ENCODE measurements at regions of chr19 and their contacts with region 1.

Region 1: DNA sequence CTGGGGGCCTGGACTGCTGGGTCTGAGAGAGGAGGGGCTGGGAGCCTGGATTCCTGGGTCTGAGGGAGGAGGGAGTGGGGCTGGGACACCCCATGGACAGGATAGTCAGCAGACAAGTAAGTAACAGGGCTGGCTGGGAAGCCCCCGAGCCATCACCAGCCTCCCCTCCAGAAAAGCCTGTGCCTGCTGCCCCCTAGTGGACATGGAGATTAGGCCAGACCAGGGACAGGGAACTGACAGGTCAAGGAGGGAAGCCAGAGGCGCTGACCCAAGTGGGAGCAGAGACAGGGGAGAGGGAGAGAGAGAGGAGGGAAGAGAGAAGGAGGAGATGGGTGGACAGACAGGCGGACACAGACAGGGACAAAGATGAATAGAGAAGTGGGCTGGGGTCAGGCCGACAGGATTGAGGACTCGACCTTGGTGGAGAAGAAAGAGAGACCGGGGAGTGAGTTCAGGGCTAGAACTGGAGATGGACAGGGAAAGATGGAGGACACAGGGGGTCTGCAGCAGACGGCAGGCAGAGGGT is 6.7 kb upstream of the ERFL start:
- DNase-seq: peak; percentile 85
- H3K4me3 ChIP-seq: no peak overlapping the region
- H3K27ac ChIP-seq: peak overlapping the region; percentile 62
- H3K4me1 ChIP-seq: peaks cover 87% of the 10 kb centered on the region
- CTCF ChIP-seq: peak; percentile 97

Region 2: DNA sequence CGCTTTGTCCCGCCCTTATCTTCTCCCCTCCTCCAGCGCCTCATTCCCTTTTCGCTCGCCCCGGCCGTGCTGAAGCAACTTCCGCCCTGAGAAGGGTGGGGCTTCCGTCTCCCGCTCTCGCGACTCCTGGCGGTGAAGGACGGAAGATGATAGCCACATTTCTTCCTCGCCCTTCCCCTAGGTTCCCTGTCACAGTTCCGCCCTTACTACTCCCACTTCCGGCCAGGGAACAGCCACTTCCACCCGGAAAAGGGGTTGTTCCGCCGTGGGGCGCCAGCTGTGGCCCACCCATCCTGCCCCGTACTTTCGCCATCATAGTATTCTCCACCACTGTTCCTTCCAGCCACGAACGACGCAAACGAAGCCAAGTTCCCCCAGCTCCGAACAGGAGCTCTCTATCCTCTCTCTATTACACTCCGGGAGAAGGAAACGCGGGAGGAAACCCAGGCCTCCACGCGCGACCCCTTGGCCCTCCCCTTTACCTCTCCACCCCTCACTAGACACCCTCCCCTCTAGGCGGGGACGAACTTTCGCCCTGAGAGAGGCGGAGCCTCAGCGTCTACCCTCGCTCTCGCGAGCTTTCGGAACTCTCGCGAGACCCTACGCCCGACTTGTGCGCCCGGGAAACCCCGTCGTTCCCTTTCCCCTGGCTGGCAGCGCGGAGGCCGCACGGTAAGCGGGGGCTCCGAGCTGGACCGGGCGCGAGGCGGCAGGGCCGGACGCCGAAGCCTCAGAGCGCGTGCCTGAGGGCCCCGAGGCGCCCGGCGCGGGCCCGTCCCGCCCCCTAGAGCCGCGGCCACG is 75.1 kb before region 1 on chr19 and contains the start of gene RPS19:
- CTCF ChIA-PET with region 1: no interaction called
- POLR2A ChIA-PET with region 1: no interaction called
- intact Hi-C with region 1: no loop called
- DNase-seq: peak; percentile 98
- H3K4me3 ChIP-seq: peak within 1 kb of the TSS; percentile 96
- H3K27ac ChIP-seq: peak within 1 kb of the TSS; percentile 85
- H3K4me1 ChIP-seq: peaks cover 61% of the 10 kb centered on the region
- CTCF ChIP-seq: peak; percentile 54; the same call in 1 of the 2 replicates
- total RNA-seq, gene RPS19: 4,018 and 4,414 TPM in 2 replicates

Region 3: DNA sequence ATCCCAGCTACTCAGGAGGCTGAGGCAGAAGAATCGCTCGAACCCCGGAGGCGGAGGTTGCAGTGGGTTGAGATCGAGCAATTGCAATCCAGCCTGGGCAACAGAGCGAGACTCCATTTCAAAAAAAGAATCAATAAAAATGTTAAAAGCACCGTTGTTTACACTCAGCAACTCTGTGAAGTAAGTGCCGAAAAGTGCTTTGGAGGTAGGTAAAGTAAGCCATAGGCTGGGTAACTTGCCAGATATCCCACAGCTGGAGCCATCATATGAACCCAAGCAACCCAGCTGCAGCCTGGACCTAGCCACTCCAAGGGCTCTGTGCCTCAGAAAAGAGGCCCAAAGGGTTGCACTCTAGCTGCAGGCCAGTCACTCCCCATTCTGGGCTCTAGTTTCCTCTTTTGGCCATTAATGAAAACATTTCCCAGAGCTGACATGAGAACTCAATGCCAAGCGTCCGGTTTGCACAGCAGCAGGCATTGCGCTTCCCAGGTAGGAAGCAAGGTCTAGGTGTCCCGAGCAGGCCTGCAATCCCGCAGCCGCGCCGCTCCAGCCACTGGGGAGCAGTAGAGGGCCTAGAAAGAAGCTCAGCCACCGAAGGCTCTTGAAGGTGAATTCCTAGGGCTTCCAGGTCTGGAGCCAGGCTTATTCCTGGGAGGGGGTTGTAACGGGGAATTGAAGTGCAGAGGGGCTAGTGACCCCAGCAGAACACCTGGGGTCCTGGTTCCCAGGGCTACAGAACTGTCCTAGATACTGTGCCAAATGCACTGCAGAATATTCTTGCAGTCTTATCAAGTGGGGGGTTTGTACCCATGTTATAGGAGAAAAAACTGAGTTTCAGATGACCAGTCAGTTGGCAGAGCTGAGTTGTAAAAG is 61.9 kb before region 1 on chr19:
- CTCF ChIA-PET with region 1: interaction called, 6 read pairs
- POLR2A ChIA-PET with region 1: interaction called, 6 read pairs
- intact Hi-C with region 1: loop called (anchors 1 kb)
- DNase-seq: peak; percentile 77
- H3K4me3 ChIP-seq: no peak overlapping the region
- H3K27ac ChIP-seq: peak overlapping the region; percentile 100
- H3K4me1 ChIP-seq: peaks cover 88% of the 10 kb centered on the region
- CTCF ChIP-seq: peak; percentile 94

Region 4: DNA sequence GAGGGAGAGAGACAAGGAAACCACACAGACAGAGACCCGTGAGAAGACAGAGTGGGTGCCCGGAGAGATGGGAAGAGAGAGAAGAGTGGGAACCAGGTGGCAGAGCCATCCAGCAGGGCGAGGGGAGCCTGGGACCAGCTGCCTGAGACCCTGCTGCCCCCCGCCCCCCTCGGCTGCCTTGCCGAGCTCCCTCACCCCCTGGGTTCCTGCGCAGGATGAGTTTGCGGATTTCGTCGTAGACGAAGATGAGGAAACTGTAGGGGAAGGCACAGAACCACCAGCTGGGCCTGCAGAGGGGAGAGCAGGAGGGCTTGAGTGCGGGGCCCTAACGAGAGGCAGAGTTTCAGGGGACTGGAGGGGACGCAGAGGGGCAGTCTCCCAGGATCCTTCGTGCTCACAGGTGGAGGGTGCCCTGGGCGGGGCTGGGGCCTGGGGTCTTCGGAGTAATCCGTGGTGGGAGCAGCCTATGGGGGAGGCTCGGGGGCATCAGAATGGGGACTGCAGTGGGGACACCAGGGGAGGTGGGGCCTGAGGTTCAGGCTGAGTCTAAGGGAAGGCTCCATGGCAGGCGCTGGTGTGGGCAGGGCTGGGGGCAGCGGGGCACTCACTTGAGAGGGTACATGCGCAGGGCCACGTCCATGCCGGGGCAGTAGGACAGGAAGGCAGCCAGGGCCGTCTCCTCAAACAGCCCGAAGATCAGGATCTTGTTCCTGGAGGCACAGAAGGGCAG is 32.3 kb after region 1 on chr19:
- CTCF ChIA-PET with region 1: no interaction called
- POLR2A ChIA-PET with region 1: no interaction called
- intact Hi-C with region 1: no loop called
- DNase-seq: no peak
- H3K4me3 ChIP-seq: no peak overlapping the region
- H3K27ac ChIP-seq: no peak overlapping the region
- H3K4me1 ChIP-seq: no peaks in the 10 kb centered on the region
- CTCF ChIP-seq: no peak